ENCODE measurements at regions of chr2 and their contacts with region 1.

Region 1: GRCh38 chr2:233519787-233520611 is 46.6 kb downstream of the USP40 start:
- DNase-seq: no peak
- ATAC-seq: no peak
- H3K4me3 ChIP-seq: no peak overlapping the region
- H3K27ac ChIP-seq: no peak overlapping the region
- H3K4me1 ChIP-seq: no peaks in the 10 kb centered on the region
- H3K27me3 ChIP-seq: no peaks in the 10 kb centered on the region
- CTCF ChIP-seq: no peak

Region 2: DNA sequence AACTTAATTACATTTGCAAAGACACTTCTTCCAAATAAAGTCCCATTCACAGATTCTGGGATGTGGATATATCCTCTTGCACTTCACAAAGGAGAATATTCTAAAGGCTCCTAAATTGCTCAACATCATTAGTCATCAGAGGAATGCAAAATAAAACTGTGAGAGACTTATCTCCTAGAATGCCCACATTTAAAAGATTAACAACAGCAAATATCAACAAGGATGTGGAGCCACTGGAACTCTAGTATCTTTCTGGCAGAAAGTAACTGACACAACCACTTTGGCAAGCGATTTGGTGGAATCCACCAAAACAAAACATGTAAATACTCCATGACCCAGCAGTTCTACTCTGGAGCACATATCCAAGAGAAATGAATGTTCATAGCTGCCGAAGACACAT is 482.9 kb before region 1 on chr2:
- CTCF ChIA-PET with region 1: no interaction called
- POLR2A ChIA-PET with region 1: no interaction called
- in situ Hi-C with region 1: no loop called
- intact Hi-C with region 1: no loop called
- DNase-seq: no peak
- ATAC-seq: no peak
- H3K4me3 ChIP-seq: no peak overlapping the region
- H3K27ac ChIP-seq: no peak overlapping the region
- H3K4me1 ChIP-seq: no peaks in the 10 kb centered on the region
- H3K27me3 ChIP-seq: no peaks in the 10 kb centered on the region
- CTCF ChIP-seq: no peak

Region 3: DNA sequence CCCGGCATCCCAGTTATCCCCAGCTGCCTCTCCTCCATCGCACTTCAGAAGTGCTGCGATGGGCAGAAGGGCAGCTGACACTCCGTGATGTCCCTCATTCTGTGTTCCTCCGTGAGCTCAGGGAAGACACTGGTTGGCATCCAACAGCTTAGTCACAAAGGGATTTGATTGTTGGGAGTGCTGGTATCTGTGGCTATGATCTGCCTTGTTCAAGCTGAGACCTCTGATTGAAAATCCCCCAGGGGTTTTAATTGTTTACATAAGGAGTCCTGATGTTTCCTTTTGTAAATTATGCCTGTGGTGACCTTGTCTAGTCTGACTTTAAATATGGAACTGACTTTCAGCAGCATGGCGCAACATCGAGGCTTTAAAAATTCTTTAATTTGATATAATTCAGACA is 231.3 kb before region 1 on chr2:
- CTCF ChIA-PET with region 1: no interaction called
- POLR2A ChIA-PET with region 1: no interaction called
- in situ Hi-C with region 1: no loop called
- intact Hi-C with region 1: no loop called
- DNase-seq: no peak
- ATAC-seq: no peak
- H3K4me3 ChIP-seq: no peak overlapping the region
- H3K27ac ChIP-seq: no peak overlapping the region
- H3K4me1 ChIP-seq: no peaks in the 10 kb centered on the region
- H3K27me3 ChIP-seq: no peaks in the 10 kb centered on the region
- CTCF ChIP-seq: no peak

Region 4: DNA sequence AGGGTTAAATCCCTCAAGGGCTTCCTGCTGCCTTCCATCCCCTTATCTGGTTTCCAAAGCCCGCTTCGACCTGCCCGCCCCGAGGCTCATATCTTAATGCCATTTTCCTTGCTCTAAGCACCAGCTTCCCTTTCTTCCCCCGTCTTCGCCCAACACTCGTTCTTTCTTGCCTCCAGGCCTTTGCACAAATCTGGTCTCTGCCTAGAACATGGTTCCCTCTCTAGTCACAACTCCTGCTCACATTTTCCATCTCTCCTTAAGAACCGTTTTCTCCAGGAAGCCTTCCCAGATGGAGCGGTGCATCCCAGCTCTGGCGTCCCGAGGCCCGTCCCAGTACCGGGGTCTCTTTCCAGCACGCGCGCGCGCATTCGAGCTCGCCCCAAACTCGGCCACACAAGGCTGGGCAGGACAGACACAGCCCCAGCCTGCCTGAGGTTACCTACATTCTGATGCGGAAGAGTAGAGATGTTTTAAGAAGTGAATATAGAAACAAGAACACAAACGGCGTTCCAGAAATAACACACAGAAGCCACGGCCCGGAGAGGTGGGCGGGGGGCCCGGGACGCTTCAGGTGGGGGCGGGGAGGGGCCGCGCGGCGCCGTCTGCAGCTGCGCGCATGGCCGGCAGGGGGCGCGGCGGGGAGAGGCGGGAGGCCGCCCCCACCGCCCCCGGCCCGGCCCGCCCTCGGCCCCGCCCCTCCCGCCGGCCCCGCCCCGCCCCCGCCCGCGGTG is 166.1 kb before region 1 on chr2 and contains the start of gene DGKD:
- CTCF ChIA-PET with region 1: no interaction called
- POLR2A ChIA-PET with region 1: no interaction called
- in situ Hi-C with region 1: no loop called
- intact Hi-C with region 1: no loop called
- DNase-seq: no peak
- ATAC-seq: peak; percentile 69
- H3K4me3 ChIP-seq: peak within 1 kb of the TSS; percentile 83 to 87
- H3K27ac ChIP-seq: peak within 1 kb of the TSS; percentile 90
- H3K4me1 ChIP-seq: peaks cover 63% of the 10 kb centered on the region
- H3K27me3 ChIP-seq: no peaks in the 10 kb centered on the region
- CTCF ChIP-seq: peak; percentile 80
- total RNA-seq, gene DGKD: 89.0 TPM

Region 5: DNA sequence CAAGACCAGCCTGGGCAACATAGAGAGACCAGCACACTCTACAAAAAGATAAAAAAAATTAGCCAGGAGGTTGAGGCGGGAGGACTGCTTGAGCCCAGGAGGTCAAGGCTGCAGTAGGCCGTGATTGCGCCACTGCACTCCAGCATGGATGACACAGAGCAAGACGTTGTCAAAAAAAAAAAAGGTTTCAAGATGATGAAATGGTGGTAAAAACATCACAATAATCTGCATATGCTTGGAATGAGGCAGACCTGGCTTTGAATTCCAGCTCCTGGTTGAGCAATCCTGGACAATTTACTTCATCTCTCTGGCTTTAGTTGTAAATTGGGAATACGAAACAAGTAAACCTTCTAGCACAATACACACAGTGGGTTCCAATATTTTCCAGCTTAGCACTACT is 22.5 kb after region 1 on chr2:
- CTCF ChIA-PET with region 1: no interaction called
- POLR2A ChIA-PET with region 1: interaction called, 11 read pairs
- in situ Hi-C with region 1: no loop called
- intact Hi-C with region 1: no loop called
- DNase-seq: no peak
- ATAC-seq: no peak
- H3K4me3 ChIP-seq: no peak overlapping the region
- H3K27ac ChIP-seq: no peak overlapping the region
- H3K4me1 ChIP-seq: no peaks in the 10 kb centered on the region
- H3K27me3 ChIP-seq: no peaks in the 10 kb centered on the region
- CTCF ChIP-seq: no peak

Measured in Panc1 (cell line).